MCF 10A (cell line): ENCODE measurements at regions of chr12 and their contacts with region 1.

Region 1: GRCh38 chr12:80269803-80270552 is 170.6 kb downstream of the OTOGL start:
- DNase-seq: peak; percentile 69
- H3K4me3 Mint-ChIP-seq: no peak overlapping the region
- H3K27ac Mint-ChIP-seq: no peak overlapping the region
- H3K4me1 Mint-ChIP-seq: peaks cover 23% of the 10 kb centered on the region
- H3K27me3 Mint-ChIP-seq: no peaks in the 10 kb centered on the region
- CTCF ChIP-seq: peak; percentile 68

Region 2: GRCh38 chr12:79407671-79408622 is 862.0 kb before region 1 on chr12:
- CTCF ChIA-PET with region 1: interaction called, 16 read pairs
- POLR2A ChIA-PET with region 1: no interaction called
- intact Hi-C with region 1: loop called (anchors 5 kb)
- DNase-seq: peak; percentile 89
- H3K4me3 Mint-ChIP-seq: no peak overlapping the region
- H3K27ac Mint-ChIP-seq: peak overlapping the region; percentile 54
- H3K4me1 Mint-ChIP-seq: peaks cover 13% of the 10 kb centered on the region
- H3K27me3 Mint-ChIP-seq: no peaks in the 10 kb centered on the region
- CTCF ChIP-seq: peak; percentile 75

Region 3: GRCh38 chr12:79555028-79555930 is 714.7 kb before region 1 on chr12:
- CTCF ChIA-PET with region 1: no interaction called
- POLR2A ChIA-PET with region 1: interaction called, 3 read pairs
- intact Hi-C with region 1: loop called (anchors 2 kb)
- DNase-seq: peak; percentile 49
- H3K4me3 Mint-ChIP-seq: no peak overlapping the region
- H3K27ac Mint-ChIP-seq: peak overlapping the region; percentile 32
- H3K4me1 Mint-ChIP-seq: peaks cover 16% of the 10 kb centered on the region
- H3K27me3 Mint-ChIP-seq: no peaks in the 10 kb centered on the region
- CTCF ChIP-seq: peak; percentile 41

Region 4: GRCh38 chr12:79886917-79887519 is 383.0 kb before region 1 on chr12:
- CTCF ChIA-PET with region 1: interaction called, 5 read pairs
- POLR2A ChIA-PET with region 1: no interaction called
- intact Hi-C with region 1: loop called (anchors 5 kb)
- DNase-seq: peak; percentile 61
- H3K4me3 Mint-ChIP-seq: no peak overlapping the region
- H3K27ac Mint-ChIP-seq: no peak overlapping the region
- H3K4me1 Mint-ChIP-seq: peaks cover 23% of the 10 kb centered on the region
- H3K27me3 Mint-ChIP-seq: no peaks in the 10 kb centered on the region
- CTCF ChIP-seq: peak; percentile 39

Region 5: DNA sequence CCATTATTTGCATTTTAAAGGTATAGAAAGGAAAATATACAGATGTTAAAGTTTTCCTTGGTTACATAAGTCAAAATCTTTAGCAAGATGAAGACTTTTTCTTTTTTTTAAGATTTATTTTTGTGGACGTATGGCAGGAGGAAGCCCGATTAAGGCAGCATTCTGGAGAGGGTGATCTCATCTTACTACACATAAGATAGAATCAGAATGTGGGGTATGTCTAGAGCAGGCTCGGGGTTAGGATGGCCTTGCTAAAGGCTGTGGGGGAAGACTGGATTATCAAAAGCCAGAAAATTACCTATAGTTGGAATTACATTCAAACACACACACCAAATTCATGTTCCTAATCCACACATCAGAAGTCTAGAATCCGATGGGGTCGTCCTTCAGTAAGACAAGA is 250.3 kb before region 1 on chr12:
- CTCF ChIA-PET with region 1: no interaction called
- POLR2A ChIA-PET with region 1: no interaction called
- intact Hi-C with region 1: no loop called
- DNase-seq: no peak
- H3K4me3 Mint-ChIP-seq: no peak overlapping the region
- H3K27ac Mint-ChIP-seq: no peak overlapping the region
- H3K4me1 Mint-ChIP-seq: no peaks in the 10 kb centered on the region
- H3K27me3 Mint-ChIP-seq: no peaks in the 10 kb centered on the region
- CTCF ChIP-seq: no peak

Region 6: DNA sequence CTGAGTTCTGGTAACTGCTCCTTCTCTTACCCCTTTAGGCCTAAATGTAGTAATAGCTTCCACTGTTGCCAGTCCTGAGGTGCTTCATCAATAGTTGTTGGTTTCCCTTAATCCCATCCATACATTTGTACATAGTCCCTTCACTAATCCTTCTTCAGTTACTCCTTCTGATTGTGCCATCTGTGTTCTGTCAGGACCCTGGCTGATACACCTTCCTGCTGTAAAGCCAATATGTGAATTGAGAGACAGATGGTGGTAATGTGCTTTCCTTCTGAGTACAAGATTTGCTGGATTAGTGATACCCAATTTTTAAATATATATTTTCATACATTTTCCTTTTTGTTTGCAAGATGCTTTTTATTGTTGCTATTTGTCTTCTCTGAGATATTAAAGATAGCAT is 104.2 kb before region 1 on chr12:
- CTCF ChIA-PET with region 1: no interaction called
- POLR2A ChIA-PET with region 1: no interaction called
- intact Hi-C with region 1: no loop called
- DNase-seq: no peak
- H3K4me3 Mint-ChIP-seq: no peak overlapping the region
- H3K27ac Mint-ChIP-seq: no peak overlapping the region
- H3K4me1 Mint-ChIP-seq: no peaks in the 10 kb centered on the region
- H3K27me3 Mint-ChIP-seq: peaks cover 16% of the 10 kb centered on the region
- CTCF ChIP-seq: no peak

Region 7: GRCh38 chr12:80205960-80206359 is 64.0 kb before region 1 on chr12:
- CTCF ChIA-PET with region 1: interaction called, 233 read pairs
- POLR2A ChIA-PET with region 1: no interaction called
- intact Hi-C with region 1: no loop called
- DNase-seq: no peak
- H3K4me3 Mint-ChIP-seq: no peak overlapping the region
- H3K27ac Mint-ChIP-seq: no peak overlapping the region
- H3K4me1 Mint-ChIP-seq: no peaks in the 10 kb centered on the region
- H3K27me3 Mint-ChIP-seq: no peaks in the 10 kb centered on the region
- CTCF ChIP-seq: no peak